ENCODE measurements at regions of chr20 and their contacts with region 1.

Region 1: DNA sequence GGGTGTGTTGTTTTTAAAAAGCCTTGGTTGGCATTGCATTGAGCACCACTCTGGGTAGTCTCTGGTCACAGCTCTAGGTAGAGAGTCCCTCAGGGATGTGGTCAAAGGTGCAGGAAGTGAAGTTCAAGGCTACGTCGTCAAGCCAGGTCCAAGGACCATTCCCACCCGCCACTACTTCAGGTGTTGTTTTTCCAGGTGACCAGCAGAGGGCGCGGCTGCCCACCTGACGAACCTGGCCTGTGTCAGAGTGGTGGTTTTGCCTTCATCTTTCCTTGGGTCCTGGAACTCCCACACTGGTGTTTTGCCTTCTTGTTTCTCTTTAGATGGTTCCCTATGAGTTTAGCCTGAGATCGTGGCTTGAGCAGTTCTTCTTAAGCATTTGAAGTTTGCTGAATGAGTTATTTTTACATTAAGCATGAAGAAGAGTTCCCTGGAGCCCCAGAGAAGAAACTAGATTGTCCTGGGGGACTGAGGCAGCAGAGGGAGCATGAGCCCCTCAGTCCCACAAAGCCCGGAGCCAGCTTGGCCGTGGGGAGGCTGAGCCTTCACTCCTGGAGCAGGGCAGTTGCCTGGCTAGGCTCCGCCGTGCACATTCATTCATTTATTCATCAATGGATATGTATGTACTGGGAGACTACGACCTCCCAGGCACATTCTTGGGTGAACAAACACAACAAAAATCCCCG is 5.6 kb upstream of the PHACTR3 start:
- DNase-seq: peak in 9 of 10 donors; percentile 60 to 82 (median 69)
- H3K4me3 ChIP-seq: no peak overlapping the region
- H3K27ac ChIP-seq: peak overlapping the region in 39 of 59 donors; percentile 1 to 72 (median 53)
- H3K27me3 ChIP-seq: no peaks in the 10 kb centered on the region
- CTCF ChIP-seq: peak; percentile 78 to 97 (median 92)

Region 2: GRCh38 chr20:59751056-59751688 is 152.4 kb after region 1 on chr20:
- intact Hi-C with region 1: loop called (anchors 1 to 2 kb)
- DNase-seq: peak; percentile 79 to 93 (median 86)
- H3K4me3 ChIP-seq: peak overlapping the region in 20 of 59 donors; percentile 4 to 48 (median 28)
- H3K27ac ChIP-seq: peak overlapping the region in 49 of 59 donors; percentile 6 to 82 (median 61)
- H3K27me3 ChIP-seq: no peaks in the 10 kb centered on the region
- CTCF ChIP-seq: peak; percentile 66 to 97 (median 92)

Region 3: GRCh38 chr20:59835448-59836395 is 237.0 kb after region 1 on chr20:
- intact Hi-C with region 1: loop called in 1 of 2 experiments (anchors 10 kb)
- DNase-seq: peak in 6 of 10 donors; percentile 33 to 77 (median 56)
- H3K4me3 ChIP-seq: peak overlapping the region in 54 of 59 donors; percentile 6 to 55 (median 35)
- H3K27ac ChIP-seq: peak overlapping the region in 42 of 59 donors; percentile 1 to 75 (median 34)
- H3K27me3 ChIP-seq: no peaks in the 10 kb centered on the region
- CTCF ChIP-seq: no peak

Region 4: DNA sequence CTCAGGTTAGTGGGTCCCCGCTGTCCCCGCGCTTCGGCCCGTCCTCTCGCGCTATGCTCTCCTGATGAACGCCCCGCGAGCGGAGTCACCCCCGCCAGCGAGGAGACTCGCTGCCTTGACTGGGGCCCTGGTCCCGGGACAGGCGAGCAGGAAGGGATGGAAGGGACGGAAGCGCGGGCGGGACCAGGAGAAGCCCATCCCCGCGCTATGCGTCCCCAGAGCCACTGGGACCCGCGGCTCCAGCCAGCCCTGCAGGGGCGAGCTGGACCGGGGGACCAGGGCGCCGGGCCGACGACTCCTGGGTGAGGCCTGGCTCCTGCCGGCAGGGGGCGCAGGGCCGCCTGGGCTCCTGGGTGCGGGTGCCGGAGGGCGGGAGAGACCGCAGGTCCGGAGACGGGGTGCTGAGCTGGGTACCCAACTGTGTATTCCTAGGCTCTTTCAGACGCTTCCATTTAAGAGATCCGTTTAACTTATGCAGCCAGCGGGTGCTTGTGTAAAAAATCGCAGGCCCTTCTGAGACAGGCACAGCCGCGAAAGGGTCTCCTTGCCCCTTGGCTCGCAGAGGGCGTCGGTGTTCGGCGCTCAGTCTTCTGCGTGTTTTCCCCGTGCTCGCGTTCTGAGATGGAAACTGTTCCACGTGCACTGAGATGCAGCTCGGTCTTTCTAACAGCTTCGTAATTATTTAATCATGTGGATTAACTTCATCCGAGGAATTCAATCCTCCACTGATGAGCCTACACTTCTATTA is 335.3 kb after region 1 on chr20:
- intact Hi-C with region 1: loop called in 1 of 2 experiments (anchors 10 kb)
- DNase-seq: peak; percentile 64 to 88 (median 76)
- H3K4me3 ChIP-seq: peak overlapping the region; percentile 55 to 93 (median 77)
- H3K27ac ChIP-seq: peak overlapping the region in 55 of 59 donors; percentile 10 to 89 (median 68)
- H3K27me3 ChIP-seq: no peaks in the 10 kb centered on the region
- CTCF ChIP-seq: peak; percentile 57 to 98 (median 93)

Measured in dorsolateral prefrontal cortex (tissue), 120 donors.